GM12878 (cell line): ENCODE measurements at regions of chr2 and their contacts with region 1.

Region 1: GRCh38 chr2:108583903-108584520 is 49.7 kb downstream of the LIMS1 start:
- DNase-seq: no peak
- ATAC-seq: peak; percentile 82
- H3K4me3 ChIP-seq: no peak overlapping the region
- H3K27ac ChIP-seq: no peak overlapping the region
- H3K4me1 ChIP-seq: peaks cover 43% of the 10 kb centered on the region
- H3K27me3 ChIP-seq: no peaks in the 10 kb centered on the region
- CTCF ChIP-seq: peak; percentile 66 to 89 (median 76)
- EP300 ChIP-seq: no peak
- POLR2A ChIP-seq: no peak
- RAD21 ChIP-seq: peak; percentile 92

Region 2: GRCh38 chr2:107936433-107937359 is 647.3 kb before region 1 on chr2:
- CTCF ChIA-PET with region 1: interaction called, 4 read pairs
- POLR2A ChIA-PET with region 1: no interaction called
- RAD21 ChIA-PET with region 1: interaction called, 3 read pairs
- SMC1A ChIA-PET with region 1: no interaction called
- in situ Hi-C with region 1: loop called (anchors 10 kb)
- intact Hi-C with region 1: loop called (anchors 2 kb)
- DNase-seq: no peak
- ATAC-seq: no peak
- H3K4me3 ChIP-seq: no peak overlapping the region
- H3K27ac ChIP-seq: no peak overlapping the region
- H3K4me1 ChIP-seq: no peaks in the 10 kb centered on the region
- H3K27me3 ChIP-seq: no peaks in the 10 kb centered on the region
- CTCF ChIP-seq: peak; percentile 26 to 45 (median 38); a peak in 4 of 6 replicates
- EP300 ChIP-seq: no peak
- POLR2A ChIP-seq: no peak
- RAD21 ChIP-seq: peak; percentile 49

Region 3: DNA sequence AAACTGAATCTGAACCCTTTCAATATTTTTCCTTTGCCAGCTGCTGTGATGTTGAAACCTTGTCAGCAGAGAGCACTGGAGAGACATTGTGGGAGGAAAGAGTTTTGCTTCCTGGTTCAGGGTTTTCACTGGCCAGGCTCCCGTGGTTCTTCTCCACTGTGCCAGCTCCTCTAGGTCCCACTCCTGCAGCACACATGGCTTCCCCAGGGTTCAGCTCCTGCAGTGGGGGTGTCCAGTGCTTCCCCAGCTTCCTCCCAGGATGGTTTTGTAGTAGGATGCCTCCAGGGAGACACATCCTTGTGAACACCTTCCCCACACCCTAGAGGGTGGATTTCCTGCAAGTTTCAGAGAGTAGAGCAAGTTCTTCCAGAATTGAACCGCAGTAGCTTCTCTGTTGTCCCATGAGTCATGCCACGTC is 368.2 kb before region 1 on chr2:
- CTCF ChIA-PET with region 1: interaction called, 13 read pairs
- POLR2A ChIA-PET with region 1: no interaction called
- RAD21 ChIA-PET with region 1: no interaction called
- SMC1A ChIA-PET with region 1: no interaction called
- in situ Hi-C with region 1: loop called (anchors 25 kb)
- intact Hi-C with region 1: loop called (anchors 5 kb)
- DNase-seq: no peak
- ATAC-seq: peak; percentile 44; the same call in 2 of the 3 replicates
- H3K4me3 ChIP-seq: no peak overlapping the region
- H3K27ac ChIP-seq: no peak overlapping the region
- H3K4me1 ChIP-seq: no peaks in the 10 kb centered on the region
- H3K27me3 ChIP-seq: no peaks in the 10 kb centered on the region
- CTCF ChIP-seq: peak in 2 of 3 experiments; percentile 37 to 47; a peak in 3 of 6 replicates
- EP300 ChIP-seq: no peak
- POLR2A ChIP-seq: no peak
- RAD21 ChIP-seq: peak; percentile 61

Region 4: GRCh38 chr2:108396845-108397244 is 187.2 kb before region 1 on chr2:
- CTCF ChIA-PET with region 1: interaction called, 93 read pairs
- POLR2A ChIA-PET with region 1: interaction called, 3 read pairs
- RAD21 ChIA-PET with region 1: interaction called, 29 read pairs
- SMC1A ChIA-PET with region 1: interaction called, 53 read pairs
- in situ Hi-C with region 1: loop called (anchors 5 kb)
- intact Hi-C with region 1: loop called (anchors 1 kb)
- DNase-seq: no peak
- ATAC-seq: peak; percentile 61
- H3K4me3 ChIP-seq: no peak overlapping the region
- H3K27ac ChIP-seq: no peak overlapping the region
- H3K4me1 ChIP-seq: no peaks in the 10 kb centered on the region
- H3K27me3 ChIP-seq: no peaks in the 10 kb centered on the region
- CTCF ChIP-seq: peak; percentile 40 to 51 (median 50); a peak in 5 of 6 replicates
- EP300 ChIP-seq: no peak
- POLR2A ChIP-seq: no peak
- RAD21 ChIP-seq: peak; percentile 83

Region 5: DNA sequence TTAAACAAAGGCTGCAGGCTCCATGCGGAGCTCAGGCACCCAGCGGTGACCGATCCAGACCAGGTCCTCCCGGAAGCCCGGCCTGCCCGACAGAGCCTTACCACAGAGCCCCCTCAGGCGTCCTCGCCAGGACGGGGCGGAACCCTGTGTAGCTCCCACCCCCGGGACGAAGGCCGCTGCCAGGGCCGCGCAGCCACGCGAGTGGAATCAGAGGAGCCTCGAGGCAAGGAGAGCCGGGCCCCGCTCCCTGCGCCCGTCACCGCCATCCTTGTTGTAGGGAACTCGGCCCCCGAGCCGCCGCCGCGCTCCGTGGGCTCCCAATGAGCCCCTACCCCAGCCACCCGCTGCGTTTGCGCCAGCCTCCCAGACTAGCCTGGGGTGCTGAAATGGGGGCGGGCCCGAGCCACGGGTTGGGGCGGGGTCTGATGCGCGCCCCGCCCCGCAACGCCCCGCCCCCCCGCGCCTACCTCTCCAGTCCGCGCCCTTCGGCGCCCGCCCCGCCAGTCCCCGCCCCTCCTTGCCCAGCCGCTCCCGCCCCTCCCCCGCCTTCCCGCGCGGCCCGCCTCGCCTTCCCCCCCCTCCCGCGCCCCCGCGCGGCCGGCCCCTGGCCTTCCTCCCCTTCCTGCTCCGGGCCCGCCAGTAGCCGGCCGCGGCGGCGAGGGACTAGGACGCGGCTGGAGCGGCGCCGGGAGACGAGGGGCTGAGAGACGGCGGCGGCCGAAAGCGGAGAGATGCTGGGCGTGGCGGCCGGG is 50.0 kb before region 1 on chr2 and contains the start of gene LIMS1:
- CTCF ChIA-PET with region 1: interaction called, 7 read pairs
- POLR2A ChIA-PET with region 1: interaction called, 32 read pairs
- RAD21 ChIA-PET with region 1: interaction called, 12 read pairs
- SMC1A ChIA-PET with region 1: interaction called, 214 read pairs
- in situ Hi-C with region 1: no loop called
- intact Hi-C with region 1: loop called (anchors 5 kb)
- DNase-seq: peak; percentile 50
- ATAC-seq: peak; percentile 94
- H3K4me3 ChIP-seq: peak within 1 kb of the TSS; percentile 85
- H3K27ac ChIP-seq: peak within 1 kb of the TSS; percentile 66
- H3K4me1 ChIP-seq: no peaks in the 10 kb centered on the region; the same call in 1 of the 2 replicates
- H3K27me3 ChIP-seq: no peaks in the 10 kb centered on the region
- CTCF ChIP-seq: 0 out of 6 replicates have a peak, but pooled peaks of 1 of the 3 experiments have one; percentile 7
- EP300 ChIP-seq: no peak
- POLR2A ChIP-seq: peak; percentile 93
- RAD21 ChIP-seq: 0 out of 2 replicates have a peak, but pooled peaks have one; percentile 9
- polyA plus RNA-seq, gene LIMS1: 15.7 to 17.6 TPM

Region 6: GRCh38 chr2:108607706-108608301 is 23.8 kb after region 1 on chr2:
- CTCF ChIA-PET with region 1: interaction called, 21 read pairs
- POLR2A ChIA-PET with region 1: interaction called, 5 read pairs
- RAD21 ChIA-PET with region 1: interaction called, 11 read pairs
- SMC1A ChIA-PET with region 1: interaction called, 5 read pairs
- in situ Hi-C with region 1: no loop called
- intact Hi-C with region 1: no loop called
- DNase-seq: no peak
- ATAC-seq: peak; percentile 17; the same call in 1 of the 3 replicates
- H3K4me3 ChIP-seq: no peak overlapping the region
- H3K27ac ChIP-seq: no peak overlapping the region
- H3K4me1 ChIP-seq: peaks cover 47% of the 10 kb centered on the region
- H3K27me3 ChIP-seq: no peaks in the 10 kb centered on the region
- CTCF ChIP-seq: peak; percentile 67 to 80 (median 74)
- EP300 ChIP-seq: no peak
- POLR2A ChIP-seq: no peak
- RAD21 ChIP-seq: peak; percentile 93

Region 7: DNA sequence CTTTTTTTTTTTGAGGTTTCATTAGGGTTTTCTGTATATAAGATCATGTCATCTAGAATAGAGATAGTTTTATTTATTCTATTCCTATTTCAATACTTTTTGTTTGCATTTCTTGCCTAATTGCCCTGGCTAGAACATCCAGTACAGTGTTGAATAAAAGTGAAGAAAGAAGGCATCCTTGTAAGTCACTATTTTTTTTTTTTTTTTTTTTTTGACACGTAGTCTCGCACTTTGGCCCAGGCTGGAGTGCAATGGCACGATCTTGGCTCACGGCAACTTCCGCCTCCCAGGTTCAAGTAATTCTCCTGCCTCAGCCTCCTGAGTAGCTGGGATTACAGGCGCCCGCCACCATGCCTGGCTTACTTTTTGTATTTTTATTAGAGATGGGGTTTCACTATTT is 107.4 kb after region 1 on chr2:
- CTCF ChIA-PET with region 1: no interaction called
- POLR2A ChIA-PET with region 1: no interaction called
- RAD21 ChIA-PET with region 1: no interaction called
- SMC1A ChIA-PET with region 1: no interaction called
- in situ Hi-C with region 1: no loop called
- intact Hi-C with region 1: no loop called
- DNase-seq: no peak
- ATAC-seq: no peak
- H3K4me3 ChIP-seq: no peak overlapping the region
- H3K27ac ChIP-seq: no peak overlapping the region
- H3K4me1 ChIP-seq: no peaks in the 10 kb centered on the region
- H3K27me3 ChIP-seq: no peaks in the 10 kb centered on the region
- CTCF ChIP-seq: no peak
- EP300 ChIP-seq: no peak
- POLR2A ChIP-seq: no peak
- RAD21 ChIP-seq: no peak

Region 8: DNA sequence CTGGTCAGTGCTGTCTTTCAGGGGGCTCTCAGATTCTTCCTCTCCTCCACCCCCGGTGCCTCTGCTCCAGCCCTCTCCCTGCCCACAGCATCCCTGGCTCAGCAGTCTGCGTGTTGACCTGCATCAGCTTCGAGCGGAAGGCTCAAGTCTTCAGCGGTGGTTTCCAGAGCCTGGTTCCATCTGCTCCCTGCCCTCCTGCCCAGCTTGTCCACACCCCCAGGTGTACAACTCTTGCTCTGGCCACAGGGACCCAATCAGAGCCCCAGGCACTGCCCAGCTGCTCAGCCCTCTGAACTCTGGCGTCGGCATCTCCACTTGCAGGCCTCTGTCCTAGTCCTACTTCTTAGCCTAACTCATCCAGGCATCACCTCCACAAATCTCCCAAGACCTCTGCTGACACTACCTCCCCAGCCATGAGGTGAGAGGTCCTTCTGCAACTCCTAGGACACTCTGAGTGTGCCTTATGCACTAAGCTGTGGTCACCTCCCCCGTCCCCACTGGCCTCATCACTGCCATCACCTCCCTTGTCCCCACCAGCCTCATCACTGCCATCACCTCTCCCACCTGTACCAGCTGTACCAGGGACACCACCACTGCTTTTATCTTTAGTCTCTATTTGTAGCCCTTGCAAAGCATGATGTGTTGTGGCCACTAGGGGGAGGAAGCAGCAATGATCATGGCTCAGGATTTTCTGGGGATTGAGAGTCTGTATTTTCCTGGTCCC is 344.1 kb after region 1 on chr2:
- CTCF ChIA-PET with region 1: no interaction called
- POLR2A ChIA-PET with region 1: no interaction called
- RAD21 ChIA-PET with region 1: no interaction called
- SMC1A ChIA-PET with region 1: no interaction called
- in situ Hi-C with region 1: no loop called
- intact Hi-C with region 1: no loop called
- DNase-seq: no peak
- ATAC-seq: peak; percentile 89
- H3K4me3 ChIP-seq: no peak overlapping the region
- H3K27ac ChIP-seq: no peak overlapping the region
- H3K4me1 ChIP-seq: no peaks in the 10 kb centered on the region
- H3K27me3 ChIP-seq: peaks cover 0 to 2% of the 10 kb centered on the region in 2 experiments; a peak in 2 of 4 replicates
- CTCF ChIP-seq: peak; percentile 73 to 87 (median 79)
- EP300 ChIP-seq: no peak
- POLR2A ChIP-seq: no peak
- RAD21 ChIP-seq: peak; percentile 63